Caco-2 (cell line): ENCODE measurements at regions of chr15 and their contacts with region 1.

Region 1: DNA sequence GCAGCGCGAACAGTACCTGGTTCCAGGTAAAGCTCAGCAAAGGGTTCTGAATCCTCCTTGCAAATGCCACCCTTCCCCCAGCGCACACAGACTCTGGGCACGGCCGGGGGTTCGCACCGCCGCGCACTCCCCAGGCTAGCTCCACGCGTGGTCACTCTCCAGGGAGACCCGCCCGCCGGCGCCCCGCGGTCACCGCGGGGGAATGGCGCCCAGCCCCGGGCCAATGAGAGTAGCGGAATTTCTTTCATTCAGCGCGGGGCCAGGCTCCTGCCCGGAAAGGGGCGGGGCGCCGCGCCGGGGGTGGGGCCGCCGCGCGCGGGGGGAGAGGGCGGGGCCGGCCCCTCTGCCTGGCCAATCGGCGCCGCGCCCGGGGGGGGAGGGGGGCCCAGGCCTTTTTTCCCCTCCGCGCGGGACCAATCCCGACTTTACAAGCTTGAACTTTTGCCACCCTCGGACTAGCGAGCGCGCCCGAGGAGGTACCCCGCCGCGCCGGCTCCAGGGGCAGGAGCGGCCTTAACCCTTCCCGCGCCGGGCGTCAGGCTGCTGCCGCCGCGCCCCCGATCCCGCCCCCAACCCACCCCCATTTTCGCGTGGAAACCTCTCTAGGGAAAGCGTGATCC is 1.1 kb upstream of the SMAD6 start:
- DNase-seq: peak; percentile 96 to 98
- H3K4me3 ChIP-seq: peak overlapping the region; percentile 74
- H3K4me3 Mint-ChIP-seq: peak overlapping the region; percentile 91
- H3K27ac Mint-ChIP-seq: no peak overlapping the region
- H3K4me1 ChIP-seq: peaks cover 13% of the 10 kb centered on the region
- H3K4me1 Mint-ChIP-seq: peaks cover 24% of the 10 kb centered on the region
- H3K27me3 ChIP-seq: no peaks in the 10 kb centered on the region
- H3K27me3 Mint-ChIP-seq: no peaks in the 10 kb centered on the region
- CTCF ChIP-seq: no peak

Region 2: GRCh38 chr15:66603301-66604179 is 97.4 kb before region 1 on chr15:
- CTCF ChIA-PET with region 1: interaction called, 3 read pairs
- POLR2A ChIA-PET with region 1: no interaction called
- intact Hi-C with region 1: loop called (anchors 1 kb)
- DNase-seq: peak in 1 of 2 experiments; percentile 72
- H3K4me3 ChIP-seq: no peak overlapping the region
- H3K4me3 Mint-ChIP-seq: no peak overlapping the region
- H3K27ac Mint-ChIP-seq: no peak overlapping the region
- H3K4me1 ChIP-seq: no peaks in the 10 kb centered on the region
- H3K4me1 Mint-ChIP-seq: no peaks in the 10 kb centered on the region
- H3K27me3 ChIP-seq: no peaks in the 10 kb centered on the region
- H3K27me3 Mint-ChIP-seq: no peaks in the 10 kb centered on the region
- CTCF ChIP-seq: peak; percentile 83 to 84

Region 3: DNA sequence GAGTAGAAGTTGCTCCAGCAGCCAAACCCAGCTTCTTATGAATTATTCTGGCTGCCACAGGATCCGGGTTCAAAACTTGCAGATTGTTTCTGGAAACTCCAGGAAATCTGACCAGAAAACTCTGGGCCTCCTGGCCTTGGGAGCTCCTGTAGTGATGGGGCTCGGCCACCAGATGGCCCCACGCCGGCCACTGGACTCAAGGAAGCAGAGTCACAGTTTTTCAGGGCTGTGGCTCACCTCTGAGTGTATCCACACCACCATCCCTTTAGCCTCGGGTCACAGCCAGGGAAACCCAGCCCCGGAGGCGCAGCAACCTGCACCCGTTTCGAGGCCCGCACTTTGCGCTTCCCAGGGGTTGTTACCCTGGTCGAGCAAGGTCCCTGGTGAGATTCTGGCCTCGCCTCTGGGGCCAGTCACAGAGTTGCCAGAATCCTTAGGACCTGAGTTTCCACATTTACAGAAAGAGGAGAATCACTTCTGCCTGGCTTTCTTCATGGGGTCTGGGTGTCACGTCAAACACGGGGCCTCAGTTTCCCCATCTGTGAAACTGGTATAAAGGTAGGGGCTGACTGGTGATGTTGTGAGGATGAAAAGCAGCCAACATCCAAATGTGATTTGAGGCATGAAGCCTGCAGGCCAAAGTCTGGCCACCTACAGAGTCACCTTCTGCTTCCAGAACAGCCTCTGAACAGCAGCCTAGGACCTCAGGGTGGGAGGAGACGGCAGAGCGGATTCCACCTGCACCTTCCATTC is 81.6 kb before region 1 on chr15:
- CTCF ChIA-PET with region 1: interaction called, 15 read pairs
- POLR2A ChIA-PET with region 1: interaction called, 3 read pairs
- intact Hi-C with region 1: loop called (anchors 1 kb)
- DNase-seq: peak; percentile 80 to 84
- H3K4me3 ChIP-seq: no peak overlapping the region
- H3K4me3 Mint-ChIP-seq: no peak overlapping the region
- H3K27ac Mint-ChIP-seq: no peak overlapping the region
- H3K4me1 ChIP-seq: peaks cover 20% of the 10 kb centered on the region
- H3K4me1 Mint-ChIP-seq: no peaks in the 10 kb centered on the region
- H3K27me3 ChIP-seq: no peaks in the 10 kb centered on the region
- H3K27me3 Mint-ChIP-seq: no peaks in the 10 kb centered on the region
- CTCF ChIP-seq: peak; percentile 76 to 90

Region 4: DNA sequence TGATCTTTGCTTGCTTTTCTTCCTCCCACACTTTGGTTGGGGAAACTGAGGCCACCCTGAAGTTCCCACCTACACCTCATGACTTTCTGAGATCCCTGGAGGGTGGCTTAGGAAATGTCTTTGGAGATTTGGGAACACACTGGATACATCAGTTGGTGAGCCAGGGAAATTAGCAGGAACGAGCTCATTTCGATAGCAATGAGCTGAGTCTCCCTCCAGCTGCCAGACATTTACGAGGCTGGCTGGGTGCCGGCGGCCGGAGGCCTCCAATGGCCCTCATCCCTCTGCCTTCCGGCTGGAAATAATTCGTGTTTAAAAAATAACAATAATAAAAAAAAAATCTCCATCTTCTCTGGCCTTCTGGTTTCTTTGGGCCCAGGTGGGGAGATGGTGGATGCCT is 39.9 kb after region 1 on chr15:
- CTCF ChIA-PET with region 1: no interaction called
- POLR2A ChIA-PET with region 1: no interaction called
- intact Hi-C with region 1: no loop called
- DNase-seq: no peak
- H3K4me3 ChIP-seq: no peak overlapping the region
- H3K4me3 Mint-ChIP-seq: no peak overlapping the region
- H3K27ac Mint-ChIP-seq: no peak overlapping the region
- H3K4me1 ChIP-seq: no peaks in the 10 kb centered on the region
- H3K4me1 Mint-ChIP-seq: no peaks in the 10 kb centered on the region
- H3K27me3 ChIP-seq: no peaks in the 10 kb centered on the region
- H3K27me3 Mint-ChIP-seq: no peaks in the 10 kb centered on the region
- CTCF ChIP-seq: no peak

Region 5: GRCh38 chr15:66851226-66852071 is 150.5 kb after region 1 on chr15:
- CTCF ChIA-PET with region 1: interaction called, 9 read pairs
- POLR2A ChIA-PET with region 1: no interaction called
- intact Hi-C with region 1: loop called (anchors 5 kb)
- DNase-seq: peak; percentile 86 to 87
- H3K4me3 ChIP-seq: no peak overlapping the region
- H3K4me3 Mint-ChIP-seq: peak overlapping the region; percentile 47
- H3K27ac Mint-ChIP-seq: peak overlapping the region; percentile 50
- H3K4me1 ChIP-seq: peaks cover 23% of the 10 kb centered on the region
- H3K4me1 Mint-ChIP-seq: peaks cover 19% of the 10 kb centered on the region
- H3K27me3 ChIP-seq: no peaks in the 10 kb centered on the region
- H3K27me3 Mint-ChIP-seq: no peaks in the 10 kb centered on the region
- CTCF ChIP-seq: peak; percentile 85 to 93